CD4-positive, alpha-beta T cell (primary cell): ENCODE measurements at regions of chr15 and their contacts with region 1.

Region 1: GRCh38 chr15:85475317-85475701 is 94.9 kb downstream of the AKAP13 start:
- DNase-seq: no peak
- ATAC-seq: no peak
- H3K4me3 ChIP-seq: no peak overlapping the region
- H3K4me3 Mint-ChIP-seq: no peak overlapping the region
- H3K27ac ChIP-seq: no peak overlapping the region
- H3K27ac Mint-ChIP-seq: peak overlapping the region; percentile 29
- H3K4me1 ChIP-seq: peaks cover 30% of the 10 kb centered on the region
- H3K4me1 Mint-ChIP-seq: peaks cover 94% of the 10 kb centered on the region
- H3K27me3 ChIP-seq: no peaks in the 10 kb centered on the region
- H3K27me3 Mint-ChIP-seq: no peaks in the 10 kb centered on the region
- CTCF ChIP-seq: no peak

Region 2: DNA sequence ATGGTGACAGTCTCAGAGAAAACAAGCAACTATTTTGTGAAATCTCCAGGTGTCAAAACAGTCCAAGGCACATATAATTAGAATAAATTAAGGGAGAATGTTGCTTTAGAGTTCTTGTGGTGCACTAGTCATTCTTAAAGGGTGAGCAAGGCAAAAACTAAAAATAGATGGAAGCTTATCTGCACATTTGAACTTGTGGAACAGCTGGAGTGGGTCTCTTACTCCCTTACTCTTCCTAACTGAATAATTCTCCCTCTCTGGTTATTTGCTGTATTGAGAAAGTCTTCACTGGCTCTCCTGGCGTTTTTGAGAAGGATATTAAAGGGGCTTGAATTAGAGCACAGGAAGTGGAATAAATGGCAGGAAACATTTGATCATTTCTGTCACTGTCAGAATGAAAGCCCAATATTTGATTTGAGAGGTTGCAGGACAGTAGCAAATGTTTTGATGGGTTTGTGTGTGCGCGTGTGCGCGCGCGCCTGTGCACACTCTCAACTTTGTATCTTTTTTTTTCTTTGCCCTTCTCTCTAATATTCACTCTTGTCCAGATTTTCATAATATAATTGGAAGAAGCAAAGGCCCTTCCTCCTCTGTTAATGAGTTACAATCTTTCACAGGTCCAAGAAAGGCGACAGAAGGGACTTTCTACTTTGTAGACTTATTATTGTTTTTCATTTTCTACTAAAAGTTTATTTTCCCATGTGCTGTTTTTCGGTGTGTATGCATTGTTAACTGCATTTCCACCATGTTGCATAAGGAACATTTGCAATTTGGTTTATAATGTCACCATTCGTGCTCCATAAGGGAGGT is 54.0 kb before region 1 on chr15:
- CTCF ChIA-PET with region 1: no interaction called
- POLR2A ChIA-PET with region 1: no interaction called
- intact Hi-C with region 1: loop called in 1 of 2 experiments (anchors 10 kb)
- DNase-seq: no peak
- ATAC-seq: no peak
- H3K4me3 ChIP-seq: no peak overlapping the region
- H3K4me3 Mint-ChIP-seq: no peak overlapping the region
- H3K27ac ChIP-seq: no peak overlapping the region
- H3K27ac Mint-ChIP-seq: no peak overlapping the region
- H3K4me1 ChIP-seq: peaks cover 22% of the 10 kb centered on the region
- H3K4me1 Mint-ChIP-seq: peaks cover 78% of the 10 kb centered on the region
- H3K27me3 ChIP-seq: no peaks in the 10 kb centered on the region
- H3K27me3 Mint-ChIP-seq: no peaks in the 10 kb centered on the region
- CTCF ChIP-seq: no peak